ENCODE measurements at regions of chr12 and their contacts with region 1.

Region 1: GRCh38 chr12:92570056-92570753 is 132.6 kb upstream of the PLEKHG7 start:
- DNase-seq: peak; percentile 89
- H3K4me3 Mint-ChIP-seq: no peak overlapping the region
- H3K27ac Mint-ChIP-seq: no peak overlapping the region
- H3K4me1 Mint-ChIP-seq: no peaks in the 10 kb centered on the region
- H3K27me3 Mint-ChIP-seq: no peaks in the 10 kb centered on the region
- CTCF ChIP-seq: peak; percentile 71

Region 2: DNA sequence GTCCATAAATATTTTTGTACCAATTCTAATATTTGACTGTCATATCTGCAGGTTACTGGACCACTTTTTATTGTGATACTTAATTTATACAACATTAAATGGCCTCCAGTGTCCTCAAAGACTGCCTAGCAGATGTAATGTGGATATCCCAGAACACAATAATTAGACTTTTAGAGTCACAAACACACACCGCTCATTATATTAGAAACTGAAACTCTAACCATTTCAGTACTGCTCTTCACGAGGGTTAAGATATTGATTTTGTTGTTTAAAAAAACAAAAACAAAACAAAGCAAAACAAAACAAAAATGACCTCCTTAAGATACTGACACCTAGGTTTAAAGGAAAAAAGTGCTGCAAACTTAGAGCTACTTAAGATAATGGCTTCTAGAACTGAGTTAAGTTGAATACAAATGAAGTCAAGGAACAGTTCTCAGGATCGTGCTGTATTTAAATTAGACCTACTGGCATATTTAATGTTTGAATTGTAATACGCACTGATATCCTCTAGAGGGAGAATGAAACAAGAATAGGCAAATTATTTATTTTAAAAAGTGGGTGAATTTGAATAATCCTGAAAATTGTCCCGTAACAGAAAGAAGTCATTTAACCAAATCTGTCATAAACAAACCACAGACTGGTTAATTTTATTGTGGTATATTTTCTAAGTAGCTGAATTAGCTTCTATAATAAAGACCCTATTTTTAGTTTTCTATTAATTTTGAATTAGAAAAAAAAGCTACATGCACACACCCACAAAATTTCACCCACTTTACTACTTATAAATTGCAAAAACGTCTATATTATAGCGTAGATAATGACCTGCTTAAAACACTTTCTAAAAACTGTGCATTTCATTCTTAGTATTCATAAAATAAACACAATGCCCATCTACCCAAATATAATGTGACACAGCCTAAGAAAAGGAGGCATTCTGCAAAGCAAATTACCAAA is 992.3 kb before region 1 on chr12:
- CTCF ChIA-PET with region 1: no interaction called
- POLR2A ChIA-PET with region 1: no interaction called
- intact Hi-C with region 1: loop called (anchors 2 kb)
- DNase-seq: peak; percentile 32
- H3K4me3 Mint-ChIP-seq: peak overlapping the region; percentile 57
- H3K27ac Mint-ChIP-seq: peak overlapping the region; percentile 85
- H3K4me1 Mint-ChIP-seq: peaks cover 20% of the 10 kb centered on the region
- H3K27me3 Mint-ChIP-seq: no peaks in the 10 kb centered on the region
- CTCF ChIP-seq: peak; percentile 52

Region 3: DNA sequence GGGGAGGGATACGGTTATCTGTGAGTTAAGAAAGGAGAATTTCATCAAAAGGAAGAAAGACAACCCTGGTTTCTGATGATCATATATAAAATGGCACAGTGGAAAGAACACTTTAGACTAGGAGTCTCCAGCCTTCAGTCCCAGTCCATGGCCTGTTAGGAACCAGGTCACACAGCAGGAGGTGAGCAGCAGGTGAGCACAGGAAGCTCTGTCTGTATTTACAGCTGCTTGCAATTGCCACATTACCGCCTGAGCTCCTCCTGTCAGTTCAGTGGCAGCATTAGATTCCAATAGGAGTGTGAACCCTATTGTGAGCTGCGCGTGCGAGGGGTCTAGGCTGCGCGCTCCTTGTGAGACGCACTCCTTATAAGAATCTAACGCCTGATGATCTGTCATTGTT is 562.4 kb before region 1 on chr12:
- CTCF ChIA-PET with region 1: no interaction called
- POLR2A ChIA-PET with region 1: no interaction called
- intact Hi-C with region 1: loop called (anchors 5 kb)
- DNase-seq: no peak
- H3K4me3 Mint-ChIP-seq: no peak overlapping the region
- H3K27ac Mint-ChIP-seq: no peak overlapping the region
- H3K4me1 Mint-ChIP-seq: no peaks in the 10 kb centered on the region
- H3K27me3 Mint-ChIP-seq: no peaks in the 10 kb centered on the region
- CTCF ChIP-seq: peak; percentile 6

Region 4: GRCh38 chr12:92244036-92244435 is 326.2 kb before region 1 on chr12:
- CTCF ChIA-PET with region 1: interaction called, 11 read pairs
- POLR2A ChIA-PET with region 1: interaction called, 5 read pairs
- intact Hi-C with region 1: no loop called
- DNase-seq: peak; percentile 25
- H3K4me3 Mint-ChIP-seq: peak overlapping the region; percentile 8
- H3K27ac Mint-ChIP-seq: peak overlapping the region; percentile 25
- H3K4me1 Mint-ChIP-seq: peaks cover 16% of the 10 kb centered on the region
- H3K27me3 Mint-ChIP-seq: no peaks in the 10 kb centered on the region
- CTCF ChIP-seq: no peak

Region 5: DNA sequence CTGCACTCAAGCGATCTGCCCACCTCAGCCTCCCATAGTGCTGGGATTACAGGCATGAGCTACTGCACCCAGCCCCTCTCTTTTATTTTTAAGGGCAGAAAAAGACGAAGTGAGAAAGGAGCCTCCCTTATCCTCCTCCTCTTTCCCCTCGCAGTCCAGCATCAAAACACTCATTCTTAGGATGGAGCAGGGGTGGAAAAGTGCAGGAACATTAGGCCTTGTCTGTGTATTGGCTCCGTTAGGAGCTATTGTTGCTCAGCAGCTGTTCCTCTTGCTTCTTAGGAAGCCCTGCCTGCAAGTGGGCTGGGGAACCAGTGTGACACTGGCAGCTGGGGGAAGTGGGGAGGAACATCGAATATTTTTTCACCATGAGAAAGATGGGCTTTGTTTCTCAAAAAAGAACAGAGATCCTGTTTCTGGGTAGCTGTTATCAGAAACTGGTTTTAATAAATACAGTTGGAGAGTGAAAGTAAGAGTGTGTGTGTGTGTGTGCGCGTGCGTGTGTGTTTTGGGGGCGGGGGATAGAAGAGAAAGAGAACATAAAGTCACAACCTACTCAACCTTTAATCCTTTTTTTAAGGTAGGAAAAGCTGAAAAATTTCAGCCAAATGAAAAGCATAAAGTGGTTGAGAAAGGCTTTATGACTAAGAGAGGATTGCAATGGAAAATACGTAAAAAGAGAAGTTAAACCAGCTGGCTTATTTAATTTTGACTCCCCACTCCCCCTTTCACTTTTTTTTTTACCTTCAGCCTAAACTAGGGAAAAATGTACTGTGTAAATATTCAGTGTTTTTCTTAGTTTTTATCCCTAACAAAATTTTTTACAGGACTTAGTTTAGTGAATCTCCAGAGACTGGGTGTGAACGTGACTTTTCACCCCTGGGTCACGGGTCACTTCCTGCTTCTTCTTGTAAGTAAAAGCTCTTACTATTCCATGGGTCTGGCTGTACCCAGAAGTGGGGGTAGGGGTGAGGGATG is 64.7 kb before region 1 on chr12:
- CTCF ChIA-PET with region 1: interaction called, 4 read pairs
- POLR2A ChIA-PET with region 1: interaction called, 7 read pairs
- intact Hi-C with region 1: loop called (anchors 1 kb)
- DNase-seq: no peak
- H3K4me3 Mint-ChIP-seq: no peak overlapping the region
- H3K27ac Mint-ChIP-seq: no peak overlapping the region
- H3K4me1 Mint-ChIP-seq: peaks cover 28% of the 10 kb centered on the region
- H3K27me3 Mint-ChIP-seq: no peaks in the 10 kb centered on the region
- CTCF ChIP-seq: no peak

Region 6: DNA sequence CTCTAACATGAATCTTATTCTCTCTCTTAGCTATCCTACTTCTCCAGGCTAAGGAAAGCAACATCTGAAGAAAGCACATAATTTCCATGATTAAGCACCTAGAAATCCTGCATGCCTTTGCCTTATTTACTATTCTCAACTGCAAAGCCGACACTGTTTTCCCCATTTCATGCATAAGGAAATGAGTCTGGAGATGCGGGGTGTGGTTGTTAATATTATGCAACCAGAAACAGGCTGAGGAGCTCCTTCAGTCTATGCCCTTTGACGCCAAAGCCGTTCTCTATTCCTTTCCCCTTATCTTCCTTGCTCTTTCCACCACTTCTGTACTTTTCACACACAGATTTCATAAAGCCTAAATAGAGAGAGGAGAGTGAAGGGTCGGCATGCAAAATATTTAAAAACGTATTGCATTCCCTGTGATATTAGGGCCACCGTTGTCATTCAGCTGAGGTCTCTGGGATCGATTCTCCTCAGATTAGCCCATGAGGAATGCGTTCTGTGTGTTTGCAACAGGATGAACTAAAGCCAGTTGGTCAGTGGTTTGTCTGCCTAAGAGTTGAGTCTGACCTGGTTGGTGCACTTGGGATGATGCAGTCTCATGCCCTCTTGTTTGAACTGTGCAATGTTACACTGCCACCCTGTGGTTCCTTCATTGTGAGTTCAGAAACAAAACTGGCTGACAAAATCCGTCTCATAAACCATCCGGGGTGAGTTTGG is 79.5 kb after region 1 on chr12:
- CTCF ChIA-PET with region 1: interaction called, 18 read pairs
- POLR2A ChIA-PET with region 1: interaction called, 5 read pairs
- intact Hi-C with region 1: loop called (anchors 1 kb)
- DNase-seq: peak; percentile 88
- H3K4me3 Mint-ChIP-seq: peak overlapping the region; percentile 49
- H3K27ac Mint-ChIP-seq: no peak overlapping the region
- H3K4me1 Mint-ChIP-seq: peaks cover 17% of the 10 kb centered on the region
- H3K27me3 Mint-ChIP-seq: no peaks in the 10 kb centered on the region
- CTCF ChIP-seq: peak; percentile 67